ENCODE measurements at regions of chr17 and their contacts with region 1.

Region 1: GRCh38 chr17:8095361-8095760 is 7.8 kb upstream of the ALOX12B start:
- DNase-seq: no peak
- ATAC-seq: no peak
- H3K4me3 ChIP-seq: no peak overlapping the region
- H3K27ac ChIP-seq: no peak overlapping the region
- H3K4me1 ChIP-seq: no peaks in the 10 kb centered on the region
- H3K27me3 ChIP-seq: no peaks in the 10 kb centered on the region
- CTCF ChIP-seq: no peak
- POLR2A ChIP-seq: no peak

Region 2: GRCh38 chr17:7394452-7395191 is 700.7 kb before region 1 on chr17 and contains the start of gene PLSCR3:
- intact Hi-C with region 1: no loop called
- DNase-seq: peak; percentile 92 to 95 (median 94)
- ATAC-seq: peak; percentile 86 to 96 (median 93)
- H3K4me3 ChIP-seq: peak within 1 kb of the TSS; percentile 60 to 84 (median 63)
- H3K27ac ChIP-seq: peak within 1 kb of the TSS; percentile 84 to 95 (median 92)
- H3K4me1 ChIP-seq: peaks cover 0 to 6% (median 0%) of the 10 kb centered on the region in 4 donors
- H3K27me3 ChIP-seq: no peaks in the 10 kb centered on the region
- CTCF ChIP-seq: peak; percentile 17 to 36 (median 30)
- POLR2A ChIP-seq: peak; percentile 90
- total RNA-seq, gene PLSCR3: 5.5 to 8.9 (median 6.4) TPM

Region 3: GRCh38 chr17:8057691-8058114 is 37.7 kb before region 1 on chr17:
- intact Hi-C with region 1: no loop called
- DNase-seq: no peak
- ATAC-seq: peak; percentile 82 to 85 (median 83)
- H3K4me3 ChIP-seq: no peak overlapping the region
- H3K27ac ChIP-seq: no peak overlapping the region
- H3K4me1 ChIP-seq: peaks cover 0 to 38% (median 6%) of the 10 kb centered on the region in 4 donors
- H3K27me3 ChIP-seq: peaks cover 0 to 17% of the 10 kb centered on the region in 2 donors
- CTCF ChIP-seq: peak; percentile 73 to 85 (median 75)
- POLR2A ChIP-seq: no peak

Region 4: DNA sequence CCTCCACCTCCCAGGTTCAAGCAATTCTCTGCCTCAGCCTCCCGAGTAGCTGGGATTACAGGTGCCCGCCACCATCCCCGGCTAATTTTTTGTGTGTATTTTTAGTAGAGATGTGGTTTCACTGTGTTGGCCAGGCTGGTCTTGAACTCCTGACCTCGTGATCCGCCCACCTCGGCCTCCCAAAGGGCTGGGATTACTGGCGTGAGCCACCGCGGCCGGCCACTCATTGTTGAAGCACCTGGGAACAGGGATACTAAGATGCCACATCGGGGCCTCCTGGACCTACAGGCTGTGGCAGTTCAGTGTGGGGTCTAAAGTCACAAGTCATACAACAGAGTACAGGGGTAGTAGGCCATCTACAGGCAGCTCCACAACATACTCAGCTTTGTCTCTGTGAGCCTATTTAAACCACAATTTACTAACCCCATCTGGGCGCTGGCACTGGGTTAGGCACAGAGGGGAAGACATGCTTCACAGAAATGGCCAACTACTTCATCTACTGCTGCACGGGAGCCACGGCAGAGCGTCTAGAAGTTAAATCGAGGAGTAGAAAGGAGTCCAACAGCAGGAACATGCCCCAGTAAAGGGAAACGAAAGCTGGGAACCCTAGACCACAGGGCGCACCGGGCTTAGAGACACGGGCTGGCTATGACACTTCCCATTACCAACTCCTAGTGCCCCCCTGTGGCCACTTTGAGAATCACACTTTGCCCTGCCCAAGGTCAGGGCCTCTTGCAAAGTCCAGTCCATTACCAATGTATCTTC is 63.1 kb after region 1 on chr17:
- intact Hi-C with region 1: loop called in 1 of 2 experiments (anchors 2 kb)
- DNase-seq: peak; percentile 89 to 95 (median 92)
- ATAC-seq: peak; percentile 27 to 43 (median 30)
- H3K4me3 ChIP-seq: no peak overlapping the region
- H3K27ac ChIP-seq: peak overlapping the region; percentile 77 to 99 (median 99)
- H3K4me1 ChIP-seq: peaks cover 0 to 21% (median 8%) of the 10 kb centered on the region in 4 donors
- H3K27me3 ChIP-seq: no peaks in the 10 kb centered on the region
- CTCF ChIP-seq: peak; percentile 89 to 94 (median 93)
- POLR2A ChIP-seq: peak; percentile 41